T-cell (primary cell): ENCODE measurements at regions of chr4 and their contacts with region 1.

Region 1: DNA sequence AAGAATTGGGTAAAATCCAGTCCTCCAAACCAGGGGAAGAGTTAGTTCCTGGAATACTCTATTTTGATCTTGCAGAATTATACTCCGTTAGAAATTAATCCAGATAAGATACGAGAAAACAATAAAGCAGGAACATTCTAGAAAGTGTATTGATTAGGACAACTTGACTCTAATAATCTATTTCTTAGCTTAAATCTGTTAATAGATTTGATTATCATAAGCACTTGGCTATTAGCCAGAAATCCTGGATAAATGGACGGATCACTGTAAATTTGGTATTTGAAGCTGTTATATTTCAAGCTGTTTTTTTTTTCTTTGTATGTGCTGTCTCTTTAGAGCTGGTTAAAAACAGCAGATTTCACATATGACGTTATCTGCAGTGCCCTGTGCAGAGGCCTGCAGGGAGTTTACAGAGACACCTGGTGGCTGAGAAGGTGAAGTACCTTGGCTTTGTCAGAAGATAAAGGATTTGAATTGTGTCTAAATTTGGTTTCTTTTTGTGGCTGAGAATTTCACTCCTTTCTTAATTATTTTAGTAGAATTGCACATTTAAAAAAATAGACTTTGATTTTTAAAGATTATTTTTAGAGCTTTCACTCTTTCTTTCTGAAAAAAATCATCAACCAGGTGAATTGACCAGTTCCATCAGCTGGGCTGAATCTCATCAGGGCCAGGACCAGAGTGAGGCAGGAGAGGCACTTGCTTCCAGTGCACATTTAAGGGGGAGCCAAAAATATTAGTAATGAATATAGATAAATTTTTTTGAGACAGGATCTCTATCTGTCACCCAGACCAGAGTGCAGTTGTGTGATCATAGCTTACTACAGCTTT is 9.7 kb upstream of the CHRNA9 start:
- DNase-seq: peak in 33 of 35 experiments; percentile 43 to 87 (median 65)
- ATAC-seq: peak; percentile 96 to 98 (median 97)
- H3K4me3 ChIP-seq: no peak overlapping the region
- H3K4me3 Mint-ChIP-seq: no peak overlapping the region
- H3K27ac ChIP-seq: no peak overlapping the region
- H3K27ac Mint-ChIP-seq: peak overlapping the region; percentile 9 to 14
- H3K4me1 ChIP-seq: peaks cover 4 to 9% of the 10 kb centered on the region in 2 experiments
- H3K4me1 Mint-ChIP-seq: peaks cover 21 to 31% (median 21%) of the 10 kb centered on the region in 3 donors
- H3K27me3 ChIP-seq: no peaks in the 10 kb centered on the region
- H3K27me3 Mint-ChIP-seq: peaks cover 0 to 4% of the 10 kb centered on the region in 2 donors

Region 2: DNA sequence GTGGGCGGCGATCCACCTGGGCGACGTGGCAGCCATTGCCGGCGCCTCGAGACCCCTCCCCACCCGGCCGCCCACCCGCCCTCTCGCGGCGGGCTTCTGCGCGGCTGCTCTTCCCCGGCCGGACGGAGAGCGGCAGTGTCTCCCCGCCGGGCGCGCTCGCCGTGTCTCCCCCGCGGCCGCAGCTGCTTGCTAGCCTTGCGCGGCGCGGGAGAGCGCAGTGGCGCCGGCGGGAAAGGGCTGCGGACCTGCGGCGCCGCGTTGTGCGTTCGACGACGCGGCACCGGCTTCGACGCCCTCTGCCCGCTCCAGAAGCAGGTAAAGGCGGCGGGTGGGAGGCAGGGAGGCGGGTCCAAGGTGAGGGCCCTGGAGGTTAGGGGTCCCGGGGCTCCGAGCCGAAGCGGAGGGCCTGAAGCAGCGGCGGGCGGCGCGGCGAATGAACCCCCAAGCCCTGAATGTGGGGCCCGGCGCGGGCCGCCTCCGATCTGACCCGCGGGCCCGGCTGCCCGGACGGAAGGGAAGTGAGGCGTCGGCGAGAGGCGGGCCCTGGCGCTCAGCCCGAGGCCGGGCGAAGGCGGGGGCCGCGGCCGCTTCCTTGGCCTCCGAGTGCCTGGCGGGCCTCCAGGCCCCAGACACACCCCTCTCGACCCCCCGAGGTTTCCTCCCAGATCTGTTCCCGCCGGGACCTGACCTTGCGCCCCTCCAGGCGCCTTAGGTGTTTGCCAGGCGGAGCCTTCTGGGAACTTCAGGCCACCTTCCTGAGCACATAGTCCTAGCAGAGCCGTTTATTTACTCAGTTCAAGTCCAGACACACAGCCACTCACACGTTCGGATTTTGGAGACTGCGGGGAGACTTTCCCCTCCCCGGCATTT is 268.5 kb before region 1 on chr4 and contains the start of gene N4BP2:
- CTCF ChIA-PET with region 1: interaction called in 1 of 2 experiments, 14 read pairs
- POLR2A ChIA-PET with region 1: interaction called in 1 of 2 experiments, 3 read pairs
- DNase-seq: peak; percentile 41 to 86 (median 64)
- ATAC-seq: peak; percentile 69 to 79 (median 76)
- H3K4me3 ChIP-seq: peak within 1 kb of the TSS; percentile 75 to 97
- H3K4me3 Mint-ChIP-seq: peak within 1 kb of the TSS; percentile 94 to 98 (median 95)
- H3K27ac ChIP-seq: peak within 1 kb of the TSS; percentile 87
- H3K27ac Mint-ChIP-seq: peak within 1 kb of the TSS; percentile 96
- H3K4me1 ChIP-seq: peaks cover 17 to 21% of the 10 kb centered on the region in 2 experiments
- H3K4me1 Mint-ChIP-seq: peaks cover 31 to 44% (median 37%) of the 10 kb centered on the region in 3 donors
- H3K27me3 ChIP-seq: no peaks in the 10 kb centered on the region
- H3K27me3 Mint-ChIP-seq: no peaks in the 10 kb centered on the region
- total RNA-seq, gene N4BP2: 12.6 to 38.3 (median 15.3) TPM

Region 3: GRCh38 chr4:40149960-40150385 is 175.4 kb before region 1 on chr4:
- CTCF ChIA-PET with region 1: interaction called, 7 to 20 read pairs
- POLR2A ChIA-PET with region 1: no interaction called
- DNase-seq: peak; percentile 29 to 89 (median 68)
- ATAC-seq: peak; percentile 80 to 91 (median 85)
- H3K4me3 ChIP-seq: no peak overlapping the region
- H3K4me3 Mint-ChIP-seq: no peak overlapping the region
- H3K27ac ChIP-seq: peak overlapping the region; percentile 4
- H3K27ac Mint-ChIP-seq: peak overlapping the region; percentile 87 to 89
- H3K4me1 ChIP-seq: peaks cover 11 to 34% of the 10 kb centered on the region in 2 experiments
- H3K4me1 Mint-ChIP-seq: peaks cover 36 to 41% (median 39%) of the 10 kb centered on the region in 3 donors
- H3K27me3 ChIP-seq: no peaks in the 10 kb centered on the region
- H3K27me3 Mint-ChIP-seq: no peaks in the 10 kb centered on the region

Region 4: DNA sequence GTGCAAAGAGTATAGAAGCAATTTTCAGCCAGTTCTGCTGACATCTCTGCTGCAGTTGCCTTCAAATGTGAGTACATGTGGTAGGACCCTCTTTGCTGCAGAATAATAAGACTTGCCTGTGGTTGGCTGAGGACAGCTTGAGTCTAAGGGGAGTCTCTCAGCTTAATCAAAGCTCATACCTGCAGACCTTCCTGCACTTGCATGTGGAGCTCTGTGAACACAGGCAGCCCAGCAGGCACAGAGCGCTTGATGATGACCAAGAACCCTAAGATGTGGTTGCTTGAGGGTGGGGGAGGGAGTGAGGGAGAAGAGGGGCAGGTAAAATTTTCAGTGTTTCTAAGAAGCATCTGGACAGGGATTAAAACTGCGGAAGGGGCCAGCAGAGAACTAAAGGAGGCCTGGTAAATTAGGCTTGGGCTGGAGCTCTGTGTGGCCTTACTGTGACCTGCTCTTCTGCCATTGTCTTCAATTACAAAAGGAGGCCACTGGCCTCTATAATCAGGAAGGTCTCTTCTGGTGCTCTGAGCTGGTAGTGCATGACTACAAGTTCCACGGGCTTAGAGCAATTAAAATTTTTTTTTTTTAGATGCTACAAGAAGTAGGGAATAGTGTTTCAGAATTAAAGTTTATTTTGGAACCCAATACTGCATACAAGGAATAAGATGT is 50.2 kb before region 1 on chr4:
- CTCF ChIA-PET with region 1: interaction called, 3 to 11 read pairs
- POLR2A ChIA-PET with region 1: no interaction called
- DNase-seq: no peak
- ATAC-seq: peak in 3 of 4 experiments; percentile 43 to 53 (median 53)
- H3K4me3 ChIP-seq: peak overlapping the region in 1 of 2 donors; percentile 23
- H3K4me3 Mint-ChIP-seq: peak overlapping the region in 1 of 3 donors; percentile 47
- H3K27ac ChIP-seq: no peak overlapping the region
- H3K27ac Mint-ChIP-seq: peak overlapping the region in 1 of 2 donors; percentile 71
- H3K4me1 ChIP-seq: peaks cover 18 to 25% of the 10 kb centered on the region in 2 experiments
- H3K4me1 Mint-ChIP-seq: peaks cover 38 to 43% (median 42%) of the 10 kb centered on the region in 3 donors
- H3K27me3 ChIP-seq: no peaks in the 10 kb centered on the region
- H3K27me3 Mint-ChIP-seq: no peaks in the 10 kb centered on the region

Region 5: DNA sequence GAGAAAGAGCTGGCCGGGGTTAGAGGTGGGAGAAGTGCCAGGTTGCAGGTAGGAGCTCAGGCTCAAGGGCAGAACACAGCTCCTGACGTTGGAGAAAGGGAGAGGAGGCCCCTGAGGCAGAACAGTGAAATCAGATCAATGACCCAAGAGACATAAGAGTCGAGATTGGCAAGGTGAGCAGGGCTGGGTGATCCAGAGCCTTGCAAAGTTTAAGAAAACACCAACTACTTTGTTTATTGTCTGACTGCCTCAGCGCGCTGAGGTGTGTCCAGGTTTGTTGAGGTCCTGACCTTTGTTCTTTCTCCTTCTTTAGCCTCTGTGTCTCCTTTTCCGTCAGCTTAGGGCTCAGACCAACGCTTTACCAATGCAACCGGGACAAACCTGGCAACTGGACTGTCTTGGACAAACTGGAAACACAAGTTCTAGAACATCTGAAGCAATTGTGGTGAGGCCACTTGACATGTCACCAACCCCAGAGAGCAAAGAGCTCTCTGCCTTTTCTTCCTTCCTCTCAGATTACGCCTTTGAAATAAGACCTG is 38.0 kb after region 1 on chr4:
- CTCF ChIA-PET with region 1: no interaction called
- POLR2A ChIA-PET with region 1: no interaction called
- DNase-seq: no peak
- ATAC-seq: no peak
- H3K4me3 ChIP-seq: no peak overlapping the region
- H3K4me3 Mint-ChIP-seq: no peak overlapping the region
- H3K27ac ChIP-seq: no peak overlapping the region
- H3K27ac Mint-ChIP-seq: no peak overlapping the region
- H3K4me1 ChIP-seq: no peaks in the 10 kb centered on the region
- H3K4me1 Mint-ChIP-seq: no peaks in the 10 kb centered on the region
- H3K27me3 ChIP-seq: no peaks in the 10 kb centered on the region
- H3K27me3 Mint-ChIP-seq: no peaks in the 10 kb centered on the region